ENCODE measurements at regions of chr2 and their contacts with region 1.

Region 1: GRCh38 chr2:159118115-159118858 is 149.8 kb downstream of the TANC1 start:
- DNase-seq: peak; percentile 75
- H3K4me3 Mint-ChIP-seq: no peak overlapping the region
- H3K27ac Mint-ChIP-seq: no peak overlapping the region
- H3K4me1 Mint-ChIP-seq: peaks cover 2% of the 10 kb centered on the region
- H3K27me3 Mint-ChIP-seq: no peaks in the 10 kb centered on the region

Region 2: GRCh38 chr2:158893026-158893425 is 225.3 kb before region 1 on chr2:
- CTCF ChIA-PET with region 1: interaction called, 12 read pairs
- POLR2A ChIA-PET with region 1: no interaction called
- DNase-seq: no peak
- H3K4me3 Mint-ChIP-seq: no peak overlapping the region
- H3K27ac Mint-ChIP-seq: no peak overlapping the region
- H3K4me1 Mint-ChIP-seq: no peaks in the 10 kb centered on the region
- H3K27me3 Mint-ChIP-seq: peaks cover 12% of the 10 kb centered on the region

Region 3: DNA sequence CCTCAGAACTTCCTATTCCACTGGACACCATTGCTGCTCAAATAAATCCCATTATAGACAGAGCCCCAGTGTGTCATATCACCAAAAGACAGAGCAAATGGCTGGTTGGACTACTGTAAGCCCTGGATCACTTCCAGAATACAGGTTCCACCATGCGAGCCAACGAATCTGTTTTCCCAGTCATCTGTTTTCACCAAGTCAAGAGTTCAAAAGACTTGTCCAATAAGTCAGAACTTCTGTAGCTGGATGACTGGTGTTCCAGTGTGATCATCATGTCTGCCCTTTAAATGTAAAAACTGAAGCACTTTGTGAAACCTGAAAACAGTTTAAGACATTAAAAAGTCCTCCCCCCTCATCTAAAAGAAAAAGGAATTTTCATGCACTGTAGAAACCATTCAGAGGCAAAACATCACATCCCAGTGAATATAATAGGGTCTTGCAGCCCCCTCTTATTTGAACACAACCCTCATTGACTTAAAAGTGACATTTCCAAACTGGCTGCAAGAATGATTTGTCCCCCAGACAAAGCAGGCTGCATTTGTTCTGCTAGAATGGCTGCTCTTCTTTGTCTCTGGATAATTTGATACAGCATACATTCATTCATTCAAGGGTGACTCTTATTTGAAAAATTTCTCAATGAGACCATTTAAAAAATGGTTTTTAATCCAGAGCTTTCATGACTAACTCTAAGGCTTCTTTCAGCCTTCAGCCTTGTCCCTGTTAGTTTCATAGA is 214.4 kb before region 1 on chr2:
- CTCF ChIA-PET with region 1: interaction called, 74 read pairs
- POLR2A ChIA-PET with region 1: no interaction called
- DNase-seq: no peak
- H3K4me3 Mint-ChIP-seq: no peak overlapping the region
- H3K27ac Mint-ChIP-seq: no peak overlapping the region
- H3K4me1 Mint-ChIP-seq: no peaks in the 10 kb centered on the region
- H3K27me3 Mint-ChIP-seq: peaks cover 2% of the 10 kb centered on the region

Region 4: DNA sequence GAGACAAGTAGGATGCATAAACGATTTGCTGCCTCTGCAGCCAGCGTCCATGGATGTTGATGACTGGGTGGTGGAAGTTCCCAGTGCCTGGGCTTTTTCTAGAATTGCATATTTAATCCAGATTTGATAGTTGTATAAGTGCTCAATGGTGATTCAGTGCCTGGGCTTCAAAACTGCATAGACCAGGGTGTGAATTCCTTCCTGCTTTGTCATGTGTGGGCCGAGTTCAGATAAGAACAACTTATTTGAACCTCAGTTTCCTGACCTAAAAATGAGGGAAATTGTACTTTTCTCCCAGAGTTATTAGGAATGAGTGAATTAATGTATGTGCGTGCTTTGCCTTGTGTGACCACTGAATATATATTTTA is 13.6 kb after region 1 on chr2:
- CTCF ChIA-PET with region 1: interaction called, 18 read pairs
- POLR2A ChIA-PET with region 1: no interaction called
- DNase-seq: no peak
- H3K4me3 Mint-ChIP-seq: no peak overlapping the region
- H3K27ac Mint-ChIP-seq: no peak overlapping the region
- H3K4me1 Mint-ChIP-seq: peaks cover 3% of the 10 kb centered on the region
- H3K27me3 Mint-ChIP-seq: peaks cover under 1% of the 10 kb centered on the region

Region 5: DNA sequence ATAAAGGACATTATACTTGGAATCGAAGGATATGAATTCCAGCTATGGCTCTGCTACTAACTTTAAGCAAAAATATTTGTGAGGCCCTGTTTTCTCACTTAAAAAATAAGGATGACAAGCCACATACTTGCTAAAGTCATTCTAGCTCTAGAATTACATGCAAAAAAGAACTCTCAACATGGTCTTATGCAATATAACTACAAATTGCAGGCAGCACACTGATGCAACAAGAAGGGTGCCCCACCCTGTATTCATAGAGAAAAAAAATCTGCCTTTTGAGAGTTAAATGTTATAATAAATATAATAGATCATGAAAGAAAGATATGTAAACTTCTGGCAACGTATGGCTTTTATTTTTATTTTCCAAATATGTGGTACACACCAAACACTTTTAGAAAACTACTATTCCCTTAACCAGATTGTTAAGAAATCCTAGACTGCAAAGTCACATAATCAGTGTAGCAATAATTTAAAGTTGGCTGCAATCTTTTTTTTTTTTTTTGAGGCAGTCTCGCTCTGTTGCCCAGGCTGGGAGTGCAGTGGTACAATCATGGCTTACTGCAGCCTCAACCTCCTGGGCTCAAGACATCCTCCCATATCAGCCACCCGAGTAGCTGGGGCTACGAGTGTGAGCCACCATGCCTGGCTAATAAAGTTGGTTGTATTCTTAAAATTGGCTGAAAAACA is 208.4 kb after region 1 on chr2:
- CTCF ChIA-PET with region 1: no interaction called
- POLR2A ChIA-PET with region 1: no interaction called
- DNase-seq: no peak
- H3K4me3 Mint-ChIP-seq: no peak overlapping the region
- H3K27ac Mint-ChIP-seq: no peak overlapping the region
- H3K4me1 Mint-ChIP-seq: no peaks in the 10 kb centered on the region
- H3K27me3 Mint-ChIP-seq: no peaks in the 10 kb centered on the region